MCF 10A (cell line): ENCODE measurements at regions of chr1 and their contacts with region 1.

Region 1: DNA sequence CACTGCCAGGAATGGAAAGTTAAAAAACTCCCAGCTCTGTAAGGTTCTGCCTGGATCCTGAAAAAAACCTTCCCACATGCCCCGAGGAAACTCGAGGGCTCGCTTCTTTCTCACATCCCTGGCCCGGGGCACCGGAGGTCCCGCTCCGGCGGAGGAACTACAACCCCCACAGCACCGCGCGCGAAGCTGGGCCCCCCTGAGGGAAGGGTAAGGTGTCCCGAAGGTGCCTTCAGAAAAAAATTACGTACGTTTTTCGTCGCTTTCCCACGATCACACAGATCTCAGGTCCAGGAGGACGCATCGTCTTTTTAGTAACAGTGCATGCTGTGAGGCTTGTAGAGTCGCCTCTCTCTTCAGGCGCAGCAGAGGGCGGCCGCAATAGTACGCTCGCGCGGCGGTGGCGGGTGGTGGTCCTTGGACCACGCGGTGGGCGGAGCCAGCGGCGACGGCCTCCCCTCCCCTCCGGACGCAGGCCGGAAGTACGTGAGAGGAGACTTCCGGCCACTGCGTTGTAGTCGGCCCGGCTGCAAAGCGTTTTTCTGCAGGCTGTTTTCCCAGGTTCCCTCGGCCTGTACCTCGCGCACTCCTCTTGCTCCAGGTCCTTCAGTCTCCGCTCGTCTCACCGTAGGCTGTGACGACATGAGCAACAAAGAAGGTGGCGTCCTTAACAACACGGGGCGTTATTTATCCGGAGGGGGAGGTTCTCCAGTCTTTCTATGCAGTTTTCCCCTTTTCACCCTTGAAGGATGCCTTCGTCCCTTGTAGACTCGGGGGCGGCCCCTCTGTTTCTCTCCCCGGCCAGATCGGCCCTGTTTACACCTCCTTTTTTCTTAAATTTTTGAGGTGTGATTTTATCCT is at the start of gene TSNAX:
- DNase-seq: peak; percentile 97
- H3K4me3 Mint-ChIP-seq: peak within 1 kb of the TSS; percentile 97
- H3K27ac Mint-ChIP-seq: peak within 1 kb of the TSS; percentile 98
- H3K4me1 Mint-ChIP-seq: peaks cover 36% of the 10 kb centered on the region
- H3K27me3 Mint-ChIP-seq: no peaks in the 10 kb centered on the region
- CTCF ChIP-seq: no peak
- total RNA-seq, gene TSNAX: 79.0 and 80.2 TPM in 2 replicates

Region 2: GRCh38 chr1:231478800-231479199 is 49.6 kb before region 1 on chr1:
- CTCF ChIA-PET with region 1: no interaction called
- POLR2A ChIA-PET with region 1: no interaction called
- intact Hi-C with region 1: no loop called
- DNase-seq: no peak
- H3K4me3 Mint-ChIP-seq: no peak overlapping the region
- H3K27ac Mint-ChIP-seq: no peak overlapping the region
- H3K4me1 Mint-ChIP-seq: no peaks in the 10 kb centered on the region
- H3K27me3 Mint-ChIP-seq: no peaks in the 10 kb centered on the region
- CTCF ChIP-seq: no peak

Region 3: DNA sequence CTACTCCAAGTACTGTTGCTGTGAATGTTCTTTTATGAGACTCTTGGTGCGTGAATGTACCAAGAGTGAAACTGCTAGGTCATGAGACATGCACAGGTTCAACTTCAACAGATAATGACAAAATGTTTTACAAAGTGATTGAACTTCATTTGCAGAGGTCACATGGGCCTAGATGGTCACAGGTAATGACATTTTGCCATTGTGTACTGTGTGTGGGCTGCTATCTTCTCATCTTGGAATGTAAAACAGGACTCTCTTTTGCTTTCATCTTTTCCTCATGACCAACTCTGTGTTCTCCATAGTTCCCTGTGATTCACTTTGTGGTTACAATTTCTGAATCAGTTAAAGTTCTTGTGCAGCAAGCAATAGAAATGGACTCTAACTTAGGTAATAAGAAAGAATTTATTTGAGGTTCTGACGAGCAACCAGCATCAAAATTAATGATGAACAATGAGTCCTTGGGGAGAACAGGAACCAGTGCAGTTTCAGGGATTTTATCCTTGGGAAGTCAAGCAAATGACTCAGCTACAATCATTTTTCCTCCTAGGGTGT is 16.2 kb before region 1 on chr1:
- CTCF ChIA-PET with region 1: interaction called, 3 read pairs
- POLR2A ChIA-PET with region 1: interaction called, 10 read pairs
- intact Hi-C with region 1: no loop called
- DNase-seq: no peak
- H3K4me3 Mint-ChIP-seq: no peak overlapping the region
- H3K27ac Mint-ChIP-seq: no peak overlapping the region
- H3K4me1 Mint-ChIP-seq: peaks cover 7% of the 10 kb centered on the region
- H3K27me3 Mint-ChIP-seq: no peaks in the 10 kb centered on the region
- CTCF ChIP-seq: no peak

Region 4: GRCh38 chr1:231663211-231663792 is 134.9 kb after region 1 on chr1:
- CTCF ChIA-PET with region 1: no interaction called
- POLR2A ChIA-PET with region 1: no interaction called
- intact Hi-C with region 1: no loop called
- DNase-seq: peak; percentile 58
- H3K4me3 Mint-ChIP-seq: no peak overlapping the region
- H3K27ac Mint-ChIP-seq: no peak overlapping the region
- H3K4me1 Mint-ChIP-seq: peaks cover 10% of the 10 kb centered on the region
- H3K27me3 Mint-ChIP-seq: peaks cover 15% of the 10 kb centered on the region
- CTCF ChIP-seq: no peak